ENCODE measurements at regions of chr3 and their contacts with region 1.

Region 1: GRCh38 chr3:58305882-58306711 is at the starts of genes HTD2 and RPP14:
- DNase-seq: peak; percentile 97
- H3K4me3 Mint-ChIP-seq: peak within 1 kb of the TSS; percentile 91
- H3K27ac Mint-ChIP-seq: peak within 1 kb of the TSS; percentile 100
- H3K4me1 Mint-ChIP-seq: peaks cover 23% of the 10 kb centered on the region
- H3K27me3 Mint-ChIP-seq: no peaks in the 10 kb centered on the region
- total RNA-seq, gene HTD2: 10.1 and 10.5 TPM in 2 replicates
- total RNA-seq, gene RPP14: 21.8 and 23.8 TPM in 2 replicates

Region 2: DNA sequence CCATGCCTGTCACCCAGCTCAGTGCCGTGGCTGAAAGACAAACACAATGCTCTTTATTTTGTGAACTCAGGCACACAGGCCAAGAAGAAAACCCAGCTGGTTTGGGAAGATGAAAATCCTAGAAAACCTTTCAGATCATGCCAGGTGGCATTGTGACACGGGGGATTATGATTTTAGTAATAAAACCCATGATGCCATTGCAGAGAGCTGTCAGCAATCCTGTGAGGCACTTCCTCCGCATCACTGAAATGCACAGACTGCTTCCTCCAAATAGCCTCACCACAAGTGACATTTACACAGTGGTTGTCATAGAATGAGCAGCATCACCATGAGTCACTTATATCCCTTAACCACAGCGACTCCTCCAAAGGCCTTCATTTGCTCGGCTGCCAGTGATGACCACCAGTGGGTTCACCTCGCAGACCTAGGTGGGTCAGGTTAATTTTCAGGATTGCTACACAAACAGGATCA is 45.8 kb before region 1 on chr3:
- intact Hi-C with region 1: loop called (anchors 2 kb)
- DNase-seq: no peak
- H3K4me3 Mint-ChIP-seq: no peak overlapping the region
- H3K27ac Mint-ChIP-seq: peak overlapping the region; percentile 85
- H3K4me1 Mint-ChIP-seq: peaks cover 43% of the 10 kb centered on the region
- H3K27me3 Mint-ChIP-seq: no peaks in the 10 kb centered on the region

Region 3: DNA sequence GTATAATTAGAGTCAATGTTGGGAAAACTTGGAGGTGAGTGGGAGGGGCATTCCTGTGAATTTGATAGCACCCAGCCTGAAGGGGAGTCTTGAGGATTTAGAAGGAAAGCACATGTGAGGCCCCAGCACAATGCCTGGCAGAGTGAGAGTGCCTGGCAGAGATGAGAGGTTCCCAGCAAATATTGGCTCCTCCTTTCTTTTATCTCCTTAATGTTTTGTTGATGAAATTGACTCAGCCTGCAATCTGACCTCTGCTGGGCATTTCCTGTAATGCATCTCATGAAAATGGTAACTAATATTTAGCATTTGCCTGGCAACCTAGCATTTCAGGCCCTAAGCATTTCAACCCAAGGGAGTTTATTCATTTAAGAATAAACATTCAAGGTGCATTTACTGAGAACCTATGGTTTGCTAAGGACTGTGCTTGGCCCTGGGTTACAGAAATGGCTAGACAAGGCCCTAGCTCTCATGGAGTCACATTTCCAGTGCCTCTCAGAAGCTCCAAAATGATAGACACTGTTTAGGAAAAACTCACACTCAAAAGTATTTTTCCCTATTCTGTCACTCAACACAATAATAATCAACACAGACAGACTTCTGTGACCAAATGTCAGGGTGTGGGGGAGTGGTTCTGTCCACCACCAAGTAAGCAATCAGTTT is 108.6 kb after region 1 on chr3:
- intact Hi-C with region 1: loop called (anchors 5 kb)
- DNase-seq: peak; percentile 37
- H3K4me3 Mint-ChIP-seq: no peak overlapping the region
- H3K27ac Mint-ChIP-seq: peak overlapping the region; percentile 45
- H3K4me1 Mint-ChIP-seq: peaks cover 14% of the 10 kb centered on the region
- H3K27me3 Mint-ChIP-seq: no peaks in the 10 kb centered on the region

Region 4: GRCh38 chr3:58433400-58434169 is 127.5 kb after region 1 on chr3 and contains the start of gene PDHB:
- intact Hi-C with region 1: loop called (anchors 1 kb)
- DNase-seq: peak; percentile 87
- H3K4me3 Mint-ChIP-seq: peak within 1 kb of the TSS; percentile 90
- H3K27ac Mint-ChIP-seq: peak within 1 kb of the TSS; percentile 90
- H3K4me1 Mint-ChIP-seq: peaks cover 36% of the 10 kb centered on the region
- H3K27me3 Mint-ChIP-seq: peaks cover 5% of the 10 kb centered on the region
- total RNA-seq, gene PDHB: 79.3 and 82.7 TPM in 2 replicates

Region 5: GRCh38 chr3:58491506-58492402 is 185.7 kb after region 1 on chr3 and contains the start of gene KCTD6:
- intact Hi-C with region 1: loop called (anchors 2 kb)
- DNase-seq: peak; percentile 87
- H3K4me3 Mint-ChIP-seq: peak within 1 kb of the TSS; percentile 96
- H3K27ac Mint-ChIP-seq: peak within 1 kb of the TSS; percentile 84
- H3K4me1 Mint-ChIP-seq: peaks cover 37% of the 10 kb centered on the region
- H3K27me3 Mint-ChIP-seq: peaks cover 35% of the 10 kb centered on the region
- total RNA-seq, gene KCTD6: 7.2 and 8.7 TPM in 2 replicates

Region 6: GRCh38 chr3:58630076-58630709 is 324.1 kb after region 1 on chr3:
- intact Hi-C with region 1: loop called (anchors 1 kb)
- DNase-seq: peak; percentile 30
- H3K4me3 Mint-ChIP-seq: no peak overlapping the region
- H3K27ac Mint-ChIP-seq: no peak overlapping the region
- H3K4me1 Mint-ChIP-seq: no peaks in the 10 kb centered on the region
- H3K27me3 Mint-ChIP-seq: no peaks in the 10 kb centered on the region